ENCODE measurements at regions of chr11 and their contacts with region 1.

Region 1: GRCh38 chr11:86291466-86292262 is 10.4 kb upstream of the HIKESHI start:
- DNase-seq: peak; percentile 86
- H3K4me3 Mint-ChIP-seq: peak overlapping the region; percentile 21
- H3K27ac Mint-ChIP-seq: peak overlapping the region; percentile 70
- H3K4me1 Mint-ChIP-seq: peaks cover 48% of the 10 kb centered on the region
- H3K27me3 Mint-ChIP-seq: peaks cover 1% of the 10 kb centered on the region

Region 2: GRCh38 chr11:85664615-85665481 is 626.8 kb before region 1 on chr11 and contains the start of gene CREBZF:
- intact Hi-C with region 1: loop called (anchors 10 kb)
- DNase-seq: peak; percentile 98
- H3K4me3 Mint-ChIP-seq: peak within 1 kb of the TSS; percentile 97
- H3K27ac Mint-ChIP-seq: peak within 1 kb of the TSS; percentile 99
- H3K4me1 Mint-ChIP-seq: peaks cover 29% of the 10 kb centered on the region
- H3K27me3 Mint-ChIP-seq: peaks cover 2% of the 10 kb centered on the region
- total RNA-seq, gene CREBZF: 50.9 and 54.5 TPM in 2 replicates

Region 3: DNA sequence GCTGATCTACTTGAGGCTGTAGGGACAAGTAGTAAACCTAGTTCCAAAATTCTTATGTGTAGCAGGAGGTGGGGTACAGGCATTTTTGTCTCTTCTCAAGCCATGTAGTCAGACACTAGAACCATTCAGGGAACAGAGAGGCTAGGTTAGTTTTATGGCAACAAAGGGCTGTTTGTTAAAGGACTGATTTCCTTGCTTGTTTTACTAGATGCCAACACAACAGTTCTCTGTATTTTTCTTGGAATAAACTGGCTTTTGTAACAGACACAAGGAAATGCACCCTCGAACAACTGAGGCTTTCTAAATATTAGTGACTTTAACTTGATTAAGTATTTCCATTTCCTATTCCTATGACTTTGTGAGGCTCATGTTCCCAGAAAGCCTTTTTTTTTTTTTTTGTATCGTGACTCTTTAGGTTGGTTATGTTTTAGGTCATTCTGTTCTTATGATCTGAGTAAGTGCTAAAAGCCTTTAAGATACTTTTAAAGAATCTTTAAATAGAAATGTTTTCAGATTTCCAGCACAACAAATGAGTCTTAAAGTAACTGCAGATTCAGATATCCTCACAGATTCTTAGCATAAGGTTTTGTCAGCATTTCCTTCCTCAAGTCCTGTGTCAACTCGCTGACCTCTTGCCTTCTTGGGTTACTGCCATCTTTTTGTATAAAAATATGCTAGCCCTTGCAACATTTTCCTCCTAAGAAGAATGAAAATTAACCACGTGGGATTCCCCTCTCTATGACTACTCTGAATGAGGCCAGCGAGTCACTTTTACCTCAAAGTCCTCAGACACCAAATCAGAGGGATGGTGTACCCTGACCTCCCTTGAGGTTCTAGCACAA is 344.0 kb before region 1 on chr11:
- intact Hi-C with region 1: loop called (anchors 1 kb)
- DNase-seq: peak; percentile 66
- H3K4me3 Mint-ChIP-seq: peak overlapping the region; percentile 62
- H3K27ac Mint-ChIP-seq: peak overlapping the region; percentile 94
- H3K4me1 Mint-ChIP-seq: peaks cover 39% of the 10 kb centered on the region
- H3K27me3 Mint-ChIP-seq: no peaks in the 10 kb centered on the region

Region 4: DNA sequence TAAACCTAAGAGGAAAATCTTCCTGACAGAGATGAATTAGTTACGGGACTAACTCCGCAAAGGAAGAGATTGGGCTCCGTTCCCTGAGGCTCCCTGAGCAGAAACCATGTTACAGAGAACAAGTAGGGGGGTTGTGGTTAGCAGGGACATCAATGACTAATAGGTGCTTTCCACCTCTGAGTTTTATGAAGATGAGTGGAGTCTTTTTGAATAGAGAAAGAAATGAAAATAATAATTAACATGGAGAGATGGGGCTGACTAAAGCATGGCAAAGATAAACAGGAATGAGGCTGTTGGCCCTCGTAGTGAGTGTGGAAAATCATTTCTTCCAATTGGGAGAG is 175.3 kb before region 1 on chr11:
- intact Hi-C with region 1: loop called (anchors 2 kb)
- DNase-seq: peak; percentile 70
- H3K4me3 Mint-ChIP-seq: peak overlapping the region; percentile 24
- H3K27ac Mint-ChIP-seq: peak overlapping the region; percentile 69
- H3K4me1 Mint-ChIP-seq: peaks cover 30% of the 10 kb centered on the region
- H3K27me3 Mint-ChIP-seq: peaks cover 2% of the 10 kb centered on the region

Region 5: DNA sequence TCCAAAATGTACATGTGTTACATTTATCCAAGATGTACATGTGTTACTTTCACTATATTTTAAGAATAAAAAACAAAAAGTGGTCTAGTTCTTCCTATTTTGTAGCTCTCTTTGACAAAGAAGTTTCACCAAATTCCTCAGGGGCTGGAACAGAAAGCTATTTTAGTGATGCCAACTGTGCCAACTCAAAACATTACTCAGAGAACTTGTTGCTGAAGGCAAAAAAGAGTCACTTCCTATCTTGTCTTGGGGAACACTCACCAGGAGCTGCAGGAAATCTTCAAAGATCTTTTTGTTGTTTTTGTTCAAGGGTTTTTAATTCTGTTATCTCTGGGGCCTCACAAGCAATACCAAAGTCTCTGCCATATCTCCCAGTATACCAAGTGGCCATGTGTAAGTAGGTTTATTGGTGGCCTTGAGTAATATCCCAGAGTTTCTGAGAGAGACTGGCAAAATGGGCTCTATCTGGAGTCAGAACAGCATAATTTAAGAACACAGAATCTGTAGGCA is 60.7 kb before region 1 on chr11:
- intact Hi-C with region 1: loop called (anchors 1 kb)
- DNase-seq: peak; percentile 53
- H3K4me3 Mint-ChIP-seq: no peak overlapping the region
- H3K27ac Mint-ChIP-seq: peak overlapping the region; percentile 73
- H3K4me1 Mint-ChIP-seq: peaks cover 46% of the 10 kb centered on the region
- H3K27me3 Mint-ChIP-seq: peaks cover 2% of the 10 kb centered on the region

Region 6: DNA sequence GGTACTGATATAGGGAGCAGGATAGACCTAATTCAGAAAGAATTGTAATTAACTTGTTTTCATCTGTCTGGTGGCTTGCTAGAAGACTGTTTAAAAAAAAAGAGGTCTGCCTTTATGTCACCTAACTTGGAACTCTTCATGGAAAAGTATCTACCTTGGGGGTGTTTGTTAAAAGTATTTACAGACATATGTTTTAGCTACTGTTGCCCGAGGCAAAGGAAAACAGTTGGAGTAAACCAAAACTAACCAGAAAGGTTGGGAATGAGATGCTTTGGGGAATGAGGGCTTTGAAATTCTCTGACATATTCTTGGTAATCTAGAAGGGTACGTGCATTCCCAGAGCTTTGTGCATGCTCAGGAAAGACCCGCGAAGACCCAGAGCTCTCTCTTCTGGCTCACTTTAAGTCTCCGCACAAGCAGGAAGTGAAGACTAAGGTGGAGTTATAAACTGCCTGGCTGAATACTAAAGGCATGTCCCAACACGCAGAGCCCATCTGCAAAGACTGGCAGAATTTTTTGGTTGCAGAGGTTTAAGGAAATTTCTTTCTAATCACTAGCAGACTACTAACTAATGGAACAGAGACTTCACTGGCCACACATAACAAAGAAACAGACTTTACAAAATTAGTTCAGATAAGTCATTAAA is 43.6 kb after region 1 on chr11:
- intact Hi-C with region 1: no loop called
- DNase-seq: peak; percentile 41
- H3K4me3 Mint-ChIP-seq: no peak overlapping the region
- H3K27ac Mint-ChIP-seq: no peak overlapping the region
- H3K4me1 Mint-ChIP-seq: peaks cover 3% of the 10 kb centered on the region
- H3K27me3 Mint-ChIP-seq: no peaks in the 10 kb centered on the region

Region 7: GRCh38 chr11:86440305-86440716 is 148.6 kb after region 1 on chr11:
- intact Hi-C with region 1: loop called (anchors 2 kb)
- DNase-seq: no peak
- H3K4me3 Mint-ChIP-seq: no peak overlapping the region
- H3K27ac Mint-ChIP-seq: peak overlapping the region; percentile 74
- H3K4me1 Mint-ChIP-seq: peaks cover 47% of the 10 kb centered on the region
- H3K27me3 Mint-ChIP-seq: no peaks in the 10 kb centered on the region

Region 8: DNA sequence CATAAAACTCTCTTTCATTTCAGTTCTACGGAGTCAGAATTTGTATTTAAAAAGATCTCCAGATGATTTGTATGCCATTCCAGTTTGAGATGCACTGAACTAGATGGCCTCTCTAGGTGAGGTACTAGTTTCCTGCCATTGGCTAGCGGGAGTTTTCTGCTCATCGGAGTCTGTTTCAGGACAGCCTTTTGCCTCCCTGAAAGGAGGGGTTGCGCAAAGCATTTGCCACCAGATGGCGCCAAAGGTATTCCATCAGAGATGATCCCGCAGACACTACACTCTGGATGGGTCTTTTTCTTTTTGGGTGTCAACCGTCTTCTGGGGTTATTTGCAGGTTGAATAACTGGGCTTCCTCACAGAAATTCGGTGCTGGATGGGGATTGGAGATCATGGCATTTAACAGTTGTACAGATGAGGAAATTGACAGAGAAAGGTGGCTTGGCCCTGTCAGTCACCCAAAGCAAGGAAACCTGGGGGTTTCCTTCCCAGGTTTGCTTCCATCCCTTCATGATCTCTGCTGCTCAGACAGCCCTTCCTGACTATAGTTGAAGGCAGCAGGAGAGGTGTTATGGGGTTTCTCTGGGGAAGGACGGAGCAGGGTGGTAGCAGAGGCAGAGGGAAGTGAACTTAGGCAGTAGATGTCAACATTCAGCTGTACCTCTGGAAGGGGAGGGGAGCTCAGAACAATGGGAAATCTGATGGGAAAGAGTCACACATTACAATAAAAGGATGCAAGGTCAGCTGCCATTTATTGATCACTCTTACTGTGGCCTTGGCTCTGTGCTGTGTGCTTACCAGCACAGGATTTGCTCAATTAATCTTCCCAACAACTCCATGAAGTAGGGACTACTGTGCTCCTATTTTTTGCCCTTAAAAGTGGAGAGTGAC is 164.6 kb after region 1 on chr11:
- intact Hi-C with region 1: no loop called
- DNase-seq: peak; percentile 93
- H3K4me3 Mint-ChIP-seq: no peak overlapping the region
- H3K27ac Mint-ChIP-seq: peak overlapping the region; percentile 45
- H3K4me1 Mint-ChIP-seq: peaks cover 45% of the 10 kb centered on the region
- H3K27me3 Mint-ChIP-seq: no peaks in the 10 kb centered on the region

Measured in activated CD4-positive, alpha-beta T cell treated with anti-CD3 and anti-CD28 coated beads, Interleukin-2, amount 10 ng/mL, durations not matched to agents 24 days and 14 days (primary cell).